ENCODE measurements at regions of chr12 and their contacts with region 1.

Region 1: DNA sequence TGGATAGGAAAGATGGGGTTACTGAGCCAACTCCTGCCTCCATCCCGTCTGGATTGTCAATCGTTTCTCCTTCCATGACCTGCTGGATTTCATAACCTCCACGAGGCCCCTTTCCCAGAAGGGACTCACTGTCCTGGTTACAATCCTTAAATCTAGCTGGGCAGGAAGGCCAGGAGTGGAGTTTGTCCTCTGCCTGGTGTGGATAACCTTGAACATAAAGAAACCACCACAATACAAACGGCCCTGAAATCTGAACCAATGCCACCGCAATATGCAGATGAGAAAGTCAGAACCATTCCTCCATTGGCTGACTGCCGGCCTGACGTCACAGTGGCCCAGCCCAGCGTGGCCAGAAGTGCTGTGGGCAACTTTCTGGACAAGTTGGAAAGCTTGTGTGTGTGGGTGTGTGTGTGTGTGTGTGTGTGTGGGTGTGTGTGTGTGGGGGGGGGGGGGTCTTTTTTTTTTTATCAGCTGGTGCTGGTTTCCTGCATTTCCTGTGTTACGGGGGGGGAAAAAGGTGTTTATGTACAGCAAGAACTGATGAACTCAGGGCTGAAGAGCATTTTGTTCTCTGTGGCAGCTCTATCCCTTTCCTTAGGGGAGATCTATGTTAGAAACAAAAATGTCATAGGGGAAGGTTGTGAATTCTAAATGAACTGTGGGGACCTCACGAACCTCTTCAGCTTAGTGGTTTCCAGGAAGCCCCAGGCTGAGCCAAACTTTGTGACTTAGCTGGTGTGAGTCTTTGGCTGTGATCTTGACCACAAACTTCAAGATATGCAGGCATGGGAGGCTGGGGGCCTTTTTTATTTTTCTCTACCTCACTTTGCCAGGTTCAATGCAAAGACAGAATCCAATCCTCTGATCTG is 81.6 kb upstream of the MED13L start:
- DNase-seq: peak; percentile 87
- ATAC-seq: peak; percentile 94
- H3K4me3 ChIP-seq: peak overlapping the region in 3 of 5 experiments; percentile 36 to 50 (median 37)
- H3K4me3 Mint-ChIP-seq: peak overlapping the region; percentile 75
- H3K27ac ChIP-seq: peak overlapping the region; percentile 58 to 70
- H3K27ac Mint-ChIP-seq: peak overlapping the region; percentile 89
- H3K4me1 ChIP-seq: peaks cover 26 to 30% of the 10 kb centered on the region in 2 donors
- H3K4me1 Mint-ChIP-seq: peaks cover 28% of the 10 kb centered on the region
- H3K27me3 ChIP-seq: no peaks in the 10 kb centered on the region
- H3K27me3 Mint-ChIP-seq: no peaks in the 10 kb centered on the region
- CTCF ChIP-seq: no peak

Region 2: DNA sequence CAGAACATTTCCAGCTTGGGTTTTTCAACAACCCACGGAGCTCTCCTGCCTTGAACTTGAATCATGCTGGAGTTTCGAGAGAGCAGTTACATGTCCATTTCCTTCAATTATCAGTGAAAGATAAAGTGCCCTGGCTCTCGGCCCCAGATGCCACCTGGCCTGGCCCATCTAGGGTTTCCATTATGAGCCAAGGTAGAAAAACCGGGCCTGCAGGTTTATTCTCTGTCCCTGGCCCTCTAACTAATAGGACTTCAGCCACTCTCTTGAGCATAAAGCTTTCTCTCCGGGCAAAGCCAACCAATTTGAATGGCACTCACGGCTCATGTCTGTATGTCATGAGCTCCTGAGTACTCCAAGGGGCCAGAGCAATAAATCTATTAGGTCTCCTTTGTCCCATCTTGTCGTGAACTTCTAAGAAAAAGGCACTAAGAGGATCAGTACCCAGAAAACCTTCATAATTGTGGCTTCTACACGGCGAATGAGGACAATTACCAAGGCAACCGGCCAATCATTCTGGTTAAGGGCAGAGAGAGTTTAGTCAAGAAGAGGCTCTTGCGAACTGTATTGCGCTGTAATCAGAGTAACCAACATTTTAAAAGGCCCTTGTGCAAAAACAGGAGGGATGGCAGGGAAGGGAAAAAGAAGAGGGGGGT is 474.0 kb before region 1 on chr12:
- CTCF ChIA-PET with region 1: no interaction called
- POLR2A ChIA-PET with region 1: no interaction called
- intact Hi-C with region 1: no loop called
- DNase-seq: no peak
- ATAC-seq: no peak
- H3K4me3 ChIP-seq: no peak overlapping the region
- H3K4me3 Mint-ChIP-seq: no peak overlapping the region
- H3K27ac ChIP-seq: no peak overlapping the region
- H3K27ac Mint-ChIP-seq: no peak overlapping the region
- H3K4me1 ChIP-seq: no peaks in the 10 kb centered on the region
- H3K4me1 Mint-ChIP-seq: no peaks in the 10 kb centered on the region
- H3K27me3 ChIP-seq: peaks cover 0 to 8% (median 3%) of the 10 kb centered on the region in 4 experiments
- H3K27me3 Mint-ChIP-seq: peaks cover 24% of the 10 kb centered on the region
- CTCF ChIP-seq: no peak

Region 3: GRCh38 chr12:116319898-116320621 is 39.1 kb before region 1 on chr12:
- CTCF ChIA-PET with region 1: no interaction called
- POLR2A ChIA-PET with region 1: interaction called, 3 read pairs
- intact Hi-C with region 1: loop called (anchors 5 kb)
- DNase-seq: peak; percentile 45
- ATAC-seq: peak; percentile 43
- H3K4me3 ChIP-seq: no peak overlapping the region
- H3K4me3 Mint-ChIP-seq: peak overlapping the region; percentile 55
- H3K27ac ChIP-seq: no peak overlapping the region
- H3K27ac Mint-ChIP-seq: peak overlapping the region; percentile 53
- H3K4me1 ChIP-seq: peaks cover 31 to 34% of the 10 kb centered on the region in 2 donors
- H3K4me1 Mint-ChIP-seq: peaks cover 31% of the 10 kb centered on the region
- H3K27me3 ChIP-seq: no peaks in the 10 kb centered on the region
- H3K27me3 Mint-ChIP-seq: peaks cover 3% of the 10 kb centered on the region
- CTCF ChIP-seq: no peak

Region 4: DNA sequence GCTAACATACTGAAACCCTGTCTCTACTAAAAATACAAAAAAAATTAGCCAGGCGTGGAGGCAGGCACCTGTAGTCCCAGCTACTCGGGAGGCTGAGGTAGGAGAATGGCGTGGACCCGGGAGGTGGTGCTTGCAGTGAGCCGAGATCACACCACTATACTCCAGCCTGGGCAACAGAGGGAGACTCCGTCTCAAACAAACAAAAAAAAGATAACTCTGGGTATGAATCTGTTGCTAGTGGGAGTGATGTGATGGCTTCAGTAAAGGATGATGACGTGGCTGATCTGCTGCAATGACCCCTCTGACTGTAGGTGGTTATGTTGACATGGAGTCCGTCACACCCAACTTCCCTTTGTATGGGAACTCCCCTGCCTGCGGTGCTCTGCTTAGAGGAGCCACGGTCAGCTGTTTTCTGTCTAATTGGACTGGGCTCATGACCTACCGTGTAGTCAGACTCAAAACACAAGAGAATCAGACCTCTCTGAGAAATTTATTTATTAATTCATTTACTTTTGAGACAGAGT is 22.5 kb before region 1 on chr12:
- CTCF ChIA-PET with region 1: interaction called, 3 read pairs
- POLR2A ChIA-PET with region 1: interaction called, 5 read pairs
- intact Hi-C with region 1: loop called (anchors 1 kb)
- DNase-seq: peak; percentile 94
- ATAC-seq: peak; percentile 90
- H3K4me3 ChIP-seq: peak overlapping the region in 2 of 5 experiments; percentile 18 to 35
- H3K4me3 Mint-ChIP-seq: peak overlapping the region; percentile 78
- H3K27ac ChIP-seq: peak overlapping the region; percentile 55 to 78
- H3K27ac Mint-ChIP-seq: peak overlapping the region; percentile 89
- H3K4me1 ChIP-seq: peaks cover 56 to 84% of the 10 kb centered on the region in 2 donors
- H3K4me1 Mint-ChIP-seq: peaks cover 70% of the 10 kb centered on the region
- H3K27me3 ChIP-seq: no peaks in the 10 kb centered on the region
- H3K27me3 Mint-ChIP-seq: no peaks in the 10 kb centered on the region
- CTCF ChIP-seq: peak; percentile 15

Region 5: GRCh38 chr12:116591855-116592637 is 232.9 kb after region 1 on chr12:
- CTCF ChIA-PET with region 1: no interaction called
- POLR2A ChIA-PET with region 1: no interaction called
- intact Hi-C with region 1: no loop called
- DNase-seq: no peak
- ATAC-seq: no peak
- H3K4me3 ChIP-seq: no peak overlapping the region
- H3K4me3 Mint-ChIP-seq: no peak overlapping the region
- H3K27ac ChIP-seq: peak overlapping the region; percentile 40 to 71
- H3K27ac Mint-ChIP-seq: peak overlapping the region; percentile 65
- H3K4me1 ChIP-seq: peaks cover 30 to 39% of the 10 kb centered on the region in 2 donors
- H3K4me1 Mint-ChIP-seq: peaks cover 43% of the 10 kb centered on the region
- H3K27me3 ChIP-seq: no peaks in the 10 kb centered on the region
- H3K27me3 Mint-ChIP-seq: no peaks in the 10 kb centered on the region
- CTCF ChIP-seq: no peak

Measured in B cell (primary cell).